Activated CD4-positive, alpha-beta T cell treated with anti-CD3 and anti-CD28 coated beads for 36 hours (primary cell): ENCODE measurements at regions of chr18 and their contacts with region 1.

Region 1: DNA sequence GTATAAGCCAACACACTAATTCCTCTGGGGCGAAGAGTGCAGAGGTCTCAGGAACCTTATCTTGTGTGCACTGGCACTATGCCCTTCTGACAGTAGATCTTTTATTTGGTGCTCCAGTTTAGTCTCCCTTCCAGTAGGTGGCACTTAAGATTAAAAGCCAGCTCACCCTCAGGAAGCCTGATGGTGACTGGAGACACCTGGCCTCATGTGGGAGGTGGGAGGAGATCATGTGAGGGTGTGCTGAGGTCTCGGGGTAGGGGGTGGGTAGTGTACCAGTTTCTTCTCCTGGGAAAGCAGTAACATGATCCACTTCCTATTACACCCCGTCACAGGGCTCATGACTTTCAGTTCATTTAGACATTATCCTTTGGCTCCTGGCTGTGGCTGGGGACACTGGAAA is 654.9 kb downstream of the ADCYAP1 start:
- DNase-seq: no peak
- ATAC-seq: no peak
- H3K4me3 Mint-ChIP-seq: no peak overlapping the region
- H3K27ac Mint-ChIP-seq: no peak overlapping the region
- H3K4me1 Mint-ChIP-seq: no peaks in the 10 kb centered on the region
- H3K27me3 Mint-ChIP-seq: peaks cover 6% of the 10 kb centered on the region

Region 2: DNA sequence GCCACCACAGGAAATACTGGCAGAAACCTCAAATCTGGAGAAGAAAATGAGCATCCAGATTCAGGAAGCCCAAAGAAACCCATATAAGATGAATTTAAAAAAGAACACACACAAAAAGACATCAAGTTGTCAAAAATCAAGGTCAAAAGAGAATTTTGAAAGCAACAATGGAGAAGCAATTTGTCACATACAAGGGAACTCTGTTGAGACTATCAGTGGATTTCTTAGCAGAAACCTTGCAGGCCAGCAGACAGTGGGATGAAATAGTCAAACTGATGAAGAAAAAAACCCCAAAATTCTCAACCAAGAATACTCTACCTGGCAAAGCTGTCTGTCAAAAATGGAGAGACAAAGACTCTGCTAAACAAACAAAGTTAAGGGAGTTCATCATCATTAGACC is 382.3 kb before region 1 on chr18:
- CTCF ChIA-PET with region 1: no interaction called
- POLR2A ChIA-PET with region 1: no interaction called
- intact Hi-C with region 1: no loop called
- DNase-seq: no peak
- ATAC-seq: no peak
- H3K4me3 Mint-ChIP-seq: no peak overlapping the region
- H3K27ac Mint-ChIP-seq: no peak overlapping the region
- H3K4me1 Mint-ChIP-seq: no peaks in the 10 kb centered on the region
- H3K27me3 Mint-ChIP-seq: no peaks in the 10 kb centered on the region

Region 3: DNA sequence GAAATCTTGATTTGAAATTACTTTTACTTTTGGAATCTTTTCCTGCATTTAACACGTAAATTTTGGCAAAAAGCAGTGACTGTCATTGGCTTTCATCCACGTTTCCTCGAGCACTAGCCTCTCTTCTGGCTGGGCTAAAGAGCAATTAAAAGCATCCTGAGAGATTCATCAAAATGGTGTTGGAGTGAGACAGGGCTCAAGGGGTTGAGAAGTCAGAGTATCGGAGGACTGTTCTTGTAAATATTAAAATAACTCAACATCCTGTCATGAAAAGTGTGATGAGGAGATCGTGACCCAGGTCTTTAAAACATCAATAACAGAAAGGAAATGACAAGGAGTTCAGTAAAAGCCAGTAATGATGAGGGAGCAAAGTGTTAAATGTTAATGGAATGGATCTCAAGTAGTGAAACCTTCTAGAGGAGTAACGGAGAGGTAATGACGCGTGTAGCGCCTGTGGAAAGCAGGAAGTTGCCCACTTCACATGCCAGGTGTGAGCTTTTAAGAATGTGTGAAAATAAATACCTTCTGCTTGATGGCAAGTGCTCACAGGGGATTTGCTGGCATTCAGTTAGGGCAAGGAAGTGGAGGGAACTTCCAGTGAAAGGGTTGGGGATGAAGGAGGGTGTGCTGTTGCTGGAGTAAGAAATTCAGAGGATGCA is 99.5 kb after region 1 on chr18:
- CTCF ChIA-PET with region 1: no interaction called
- POLR2A ChIA-PET with region 1: no interaction called
- intact Hi-C with region 1: loop called in 1 of 2 experiments (anchors 10 kb)
- DNase-seq: no peak
- ATAC-seq: no peak
- H3K4me3 Mint-ChIP-seq: no peak overlapping the region
- H3K27ac Mint-ChIP-seq: no peak overlapping the region
- H3K4me1 Mint-ChIP-seq: no peaks in the 10 kb centered on the region
- H3K27me3 Mint-ChIP-seq: peaks cover 4% of the 10 kb centered on the region

Region 4: DNA sequence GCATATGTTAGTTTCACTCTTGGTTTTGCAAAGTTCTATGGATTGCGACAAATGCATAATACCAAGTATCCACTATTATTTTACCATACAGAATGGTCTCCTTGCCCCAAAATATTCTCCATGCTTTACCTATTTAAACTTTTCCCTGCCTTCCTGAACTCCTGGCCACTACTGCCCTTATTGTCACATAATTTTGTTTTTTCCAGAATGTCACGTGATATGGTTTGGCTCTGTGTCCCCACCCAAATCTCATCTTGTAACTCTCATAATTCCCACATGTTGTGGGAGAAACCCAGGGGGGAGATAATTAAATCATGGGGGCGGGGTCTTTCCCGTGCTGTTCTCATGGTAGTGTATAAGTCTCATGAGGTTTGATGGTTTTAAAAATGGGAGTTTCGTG is 251.7 kb after region 1 on chr18:
- CTCF ChIA-PET with region 1: no interaction called
- POLR2A ChIA-PET with region 1: no interaction called
- intact Hi-C with region 1: no loop called
- DNase-seq: no peak
- ATAC-seq: no peak
- H3K4me3 Mint-ChIP-seq: no peak overlapping the region
- H3K27ac Mint-ChIP-seq: no peak overlapping the region
- H3K4me1 Mint-ChIP-seq: no peaks in the 10 kb centered on the region
- H3K27me3 Mint-ChIP-seq: no peaks in the 10 kb centered on the region